HEK293 (cell line): ENCODE measurements at regions of chr12 and their contacts with region 1.

Region 1: GRCh38 chr12:50314629-50315312 is 31.5 kb upstream of the LIMA1 start:
- H3K4me3 ChIP-seq: no peak overlapping the region
- H3K27ac ChIP-seq: no peak overlapping the region
- H3K4me1 ChIP-seq: no peaks in the 10 kb centered on the region
- CTCF ChIP-seq: peak; percentile 48; the same call in 1 of the 2 replicates

Region 2: DNA sequence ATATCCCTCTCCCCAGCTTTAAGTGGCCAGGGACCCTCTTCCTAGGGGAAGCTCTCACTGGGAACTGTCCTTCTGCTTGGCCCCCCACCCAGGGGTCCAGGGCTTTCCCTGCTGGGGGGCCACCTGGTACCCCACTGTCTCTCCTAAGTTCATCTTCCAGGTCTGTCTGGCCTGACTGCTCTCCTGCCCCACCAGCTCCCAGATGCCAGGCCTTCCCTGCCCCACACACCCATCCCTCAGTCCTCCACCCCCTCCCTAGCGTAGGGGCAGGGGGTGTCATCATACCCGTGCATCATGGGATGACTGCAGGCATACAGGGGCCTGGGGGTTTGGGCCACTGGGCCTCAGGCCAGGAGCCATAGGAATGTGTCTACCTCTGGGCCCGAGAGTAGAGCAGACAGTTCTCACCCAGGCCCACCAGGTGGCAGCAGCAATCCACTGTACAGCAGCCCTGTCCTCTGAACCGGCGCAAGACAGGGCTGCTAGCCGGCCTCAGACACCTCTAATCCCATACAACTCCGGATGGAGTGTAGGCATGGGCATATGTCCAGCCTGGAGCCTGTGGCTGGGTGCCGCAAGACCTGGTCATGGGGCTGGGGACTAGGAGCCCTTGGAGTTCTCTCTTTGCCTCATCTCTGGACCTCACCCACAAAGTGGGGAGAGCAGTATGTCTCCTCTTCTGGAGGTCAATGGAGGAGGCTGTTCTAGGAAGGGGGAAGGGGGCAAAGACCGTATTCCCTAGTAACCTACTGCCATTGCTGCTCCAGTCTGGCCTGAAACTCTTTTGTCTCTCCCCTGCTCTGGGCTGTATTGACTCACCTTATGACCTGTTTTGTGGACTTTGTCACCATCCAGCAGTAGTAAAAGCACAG is 239.6 kb before region 1 on chr12:
- CTCF ChIA-PET with region 1: interaction called, 11 read pairs
- POLR2A ChIA-PET with region 1: no interaction called
- H3K4me3 ChIP-seq: no peak overlapping the region
- H3K27ac ChIP-seq: no peak overlapping the region
- H3K4me1 ChIP-seq: no peaks in the 10 kb centered on the region
- CTCF ChIP-seq: peak; percentile 95

Region 3: GRCh38 chr12:50132505-50133135 is 182.2 kb before region 1 on chr12:
- CTCF ChIA-PET with region 1: interaction called, 18 read pairs
- POLR2A ChIA-PET with region 1: interaction called, 3 read pairs
- H3K4me3 ChIP-seq: no peak overlapping the region
- H3K27ac ChIP-seq: no peak overlapping the region
- H3K4me1 ChIP-seq: no peaks in the 10 kb centered on the region
- CTCF ChIP-seq: peak; percentile 27; the same call in 1 of the 2 replicates

Region 4: DNA sequence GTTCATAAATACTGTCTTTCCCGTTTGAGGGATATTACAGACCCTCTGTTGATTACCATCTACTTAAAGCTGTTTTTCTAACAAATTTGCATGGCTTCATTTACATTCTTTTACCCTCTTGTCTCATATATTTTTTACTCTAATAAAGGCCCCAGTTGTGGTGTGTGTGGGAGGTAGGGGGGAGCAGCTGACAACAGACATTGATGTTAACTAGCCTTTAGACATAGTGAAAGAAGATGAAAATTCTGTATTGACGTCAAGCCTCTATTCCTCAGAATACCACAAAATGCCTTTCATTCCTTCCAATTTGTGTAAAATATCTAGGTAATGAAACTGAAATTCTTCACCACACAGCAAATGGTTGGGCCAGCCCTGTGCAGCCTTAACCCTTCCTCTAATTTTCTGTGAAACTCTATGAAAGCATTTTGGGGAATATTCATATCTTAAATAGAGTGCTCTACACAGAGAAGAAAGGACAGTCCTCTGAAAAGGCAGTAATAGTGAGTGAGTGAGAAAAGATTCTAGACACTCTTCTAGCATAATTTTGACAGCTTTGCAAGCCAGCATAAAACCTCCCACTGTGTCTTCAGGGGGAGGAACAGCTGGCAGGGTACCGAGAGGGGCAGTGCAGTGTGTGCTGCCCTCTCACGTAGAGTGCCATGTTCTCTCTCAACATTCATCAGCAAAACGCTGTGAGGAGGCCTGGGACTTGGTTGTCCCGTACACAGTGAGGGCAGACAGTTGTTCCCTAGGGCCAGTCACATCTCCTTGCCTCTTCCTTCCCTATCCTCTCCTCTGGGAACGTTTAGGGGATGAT is 127.5 kb before region 1 on chr12:
- CTCF ChIA-PET with region 1: interaction called, 17 read pairs
- POLR2A ChIA-PET with region 1: no interaction called
- H3K4me3 ChIP-seq: no peak overlapping the region
- H3K27ac ChIP-seq: no peak overlapping the region
- H3K4me1 ChIP-seq: 0 out of 2 replicates have a peak, but pooled peaks cover 2% of the 10 kb centered on the region
- CTCF ChIP-seq: no peak

Region 5: GRCh38 chr12:50222275-50222795 is 92.4 kb before region 1 on chr12:
- CTCF ChIA-PET with region 1: interaction called, 11 read pairs
- POLR2A ChIA-PET with region 1: no interaction called
- H3K4me3 ChIP-seq: peak overlapping the region; percentile 45
- H3K27ac ChIP-seq: peak overlapping the region; percentile 88
- H3K4me1 ChIP-seq: peaks cover 22% of the 10 kb centered on the region
- CTCF ChIP-seq: peak; percentile 39; the same call in 1 of the 2 replicates